ENCODE measurements at regions of chr19 and their contacts with region 1.

Region 1: DNA sequence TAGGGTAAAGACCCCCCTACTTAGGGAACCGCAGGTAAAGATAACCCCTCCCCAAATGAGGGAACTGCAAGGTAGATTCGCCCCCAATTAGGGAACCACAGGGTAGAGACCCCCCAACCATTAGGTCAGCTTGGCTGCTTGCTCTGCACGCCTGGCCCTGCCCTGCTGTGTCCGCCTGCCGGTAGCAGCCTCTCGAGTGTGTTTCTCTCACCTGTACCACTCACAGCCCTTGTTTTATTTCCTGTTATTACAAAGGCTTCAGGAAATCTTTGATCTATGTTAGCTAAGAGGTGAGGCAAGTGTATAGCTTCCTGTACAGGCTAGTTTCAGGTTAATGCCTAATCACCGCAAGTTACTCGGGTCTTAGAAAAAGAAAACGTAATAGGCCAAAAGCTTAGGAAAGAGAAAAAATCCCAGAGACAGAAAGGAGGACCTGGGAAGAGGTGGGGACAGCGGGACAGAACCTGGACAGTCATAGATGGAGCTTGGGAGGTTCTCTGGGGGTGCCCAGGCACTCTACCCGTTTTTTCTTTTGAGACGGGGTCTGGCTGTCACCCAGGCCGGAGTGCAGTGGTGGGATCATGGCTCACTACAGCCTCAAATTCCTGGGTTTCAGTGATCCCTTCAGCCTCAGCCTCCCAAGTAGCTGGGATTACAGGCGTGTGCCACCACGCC is 23.1 kb upstream of the EIF3G start:
- DNase-seq: peak; percentile 53
- ATAC-seq: peak; percentile 87
- H3K4me3 Mint-ChIP-seq: peak overlapping the region; percentile 31
- H3K27ac Mint-ChIP-seq: peak overlapping the region; percentile 86
- H3K4me1 Mint-ChIP-seq: peaks cover 34% of the 10 kb centered on the region
- H3K27me3 Mint-ChIP-seq: no peaks in the 10 kb centered on the region
- CTCF ChIP-seq: no peak

Region 2: DNA sequence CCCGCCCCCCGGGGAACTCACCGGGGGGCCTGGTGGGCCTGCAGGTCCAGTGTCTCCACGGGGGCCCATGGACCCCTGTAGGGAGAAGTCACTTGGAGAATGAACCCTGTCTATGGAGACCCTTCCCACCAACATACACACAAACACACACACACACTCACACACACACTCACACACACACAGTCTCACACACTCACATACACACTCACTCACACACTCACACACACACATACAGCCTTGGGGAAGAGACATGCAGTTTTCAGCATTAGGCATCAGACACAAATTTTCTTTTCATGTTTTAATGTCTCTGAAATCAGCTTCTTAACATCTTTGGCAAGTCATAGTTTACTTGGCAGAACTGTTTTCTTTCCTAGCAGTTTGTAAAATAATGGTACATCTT is 175.5 kb before region 1 on chr19:
- CTCF ChIA-PET with region 1: no interaction called
- POLR2A ChIA-PET with region 1: no interaction called
- intact Hi-C with region 1: no loop called
- DNase-seq: no peak
- ATAC-seq: no peak
- H3K4me3 Mint-ChIP-seq: no peak overlapping the region
- H3K27ac Mint-ChIP-seq: no peak overlapping the region
- H3K4me1 Mint-ChIP-seq: peaks cover 3% of the 10 kb centered on the region
- H3K27me3 Mint-ChIP-seq: peaks cover 34% of the 10 kb centered on the region
- CTCF ChIP-seq: no peak

Region 3: DNA sequence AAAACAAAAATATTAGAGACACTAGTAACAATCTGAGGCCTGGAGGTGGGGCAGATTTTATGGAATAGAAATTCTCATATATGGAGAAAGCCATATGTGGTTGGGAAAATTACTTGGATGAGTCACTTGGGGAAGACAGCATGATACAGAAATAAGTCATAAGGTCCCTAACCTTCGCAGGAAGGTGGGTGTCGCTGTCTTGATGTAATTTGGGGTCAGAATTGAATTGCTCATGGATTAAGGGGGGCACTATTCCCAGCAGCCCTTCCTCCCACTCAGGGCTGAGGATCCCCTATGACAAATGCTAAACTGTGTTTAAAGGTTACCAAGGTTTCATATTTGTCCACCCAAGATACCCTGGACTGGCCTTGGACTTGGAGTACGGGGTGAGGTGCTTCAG is 124.6 kb before region 1 on chr19:
- CTCF ChIA-PET with region 1: no interaction called
- POLR2A ChIA-PET with region 1: no interaction called
- intact Hi-C with region 1: no loop called
- DNase-seq: no peak
- ATAC-seq: no peak
- H3K4me3 Mint-ChIP-seq: no peak overlapping the region
- H3K27ac Mint-ChIP-seq: no peak overlapping the region
- H3K4me1 Mint-ChIP-seq: no peaks in the 10 kb centered on the region
- H3K27me3 Mint-ChIP-seq: peaks cover 9% of the 10 kb centered on the region
- CTCF ChIP-seq: no peak

Region 4: GRCh38 chr19:10126213-10126639 is 16.6 kb before region 1 on chr19:
- CTCF ChIA-PET with region 1: interaction called, 3 read pairs
- POLR2A ChIA-PET with region 1: interaction called, 12 read pairs
- intact Hi-C with region 1: no loop called
- DNase-seq: no peak
- ATAC-seq: no peak
- H3K4me3 Mint-ChIP-seq: no peak overlapping the region
- H3K27ac Mint-ChIP-seq: no peak overlapping the region
- H3K4me1 Mint-ChIP-seq: no peaks in the 10 kb centered on the region
- H3K27me3 Mint-ChIP-seq: no peaks in the 10 kb centered on the region
- CTCF ChIP-seq: no peak

Region 5: GRCh38 chr19:10206226-10206885 is 63.5 kb after region 1 on chr19:
- CTCF ChIA-PET with region 1: no interaction called
- POLR2A ChIA-PET with region 1: no interaction called
- intact Hi-C with region 1: no loop called
- DNase-seq: no peak
- ATAC-seq: no peak
- H3K4me3 Mint-ChIP-seq: no peak overlapping the region
- H3K27ac Mint-ChIP-seq: no peak overlapping the region
- H3K4me1 Mint-ChIP-seq: no peaks in the 10 kb centered on the region
- H3K27me3 Mint-ChIP-seq: no peaks in the 10 kb centered on the region
- CTCF ChIP-seq: no peak